Dorsolateral prefrontal cortex (tissue), 120 donors: ENCODE measurements at regions of chr5 and their contacts with region 1.

Region 1: DNA sequence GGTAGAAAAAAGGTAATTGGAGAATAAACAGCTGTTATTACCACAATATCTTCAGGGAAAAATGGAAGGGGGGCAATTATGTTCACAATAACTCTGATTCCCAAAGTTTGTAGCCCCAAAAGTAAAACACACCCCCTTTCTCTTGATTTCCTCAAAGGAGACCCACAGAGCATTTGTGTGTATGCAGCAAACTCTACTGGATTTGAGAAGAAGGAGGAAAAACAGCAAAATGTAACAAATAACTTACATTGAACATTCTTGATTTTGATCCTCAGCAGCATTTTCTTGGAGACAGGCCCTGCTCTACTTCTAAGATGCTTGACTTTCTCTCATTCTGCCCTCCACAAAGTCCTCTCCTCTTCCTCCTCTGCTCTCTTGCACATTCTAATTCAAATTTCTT is 420.8 kb upstream of the EDIL3 start:
- DNase-seq: no peak
- H3K4me3 ChIP-seq: no peak overlapping the region
- H3K27ac ChIP-seq: peak overlapping the region in 10 of 59 donors; percentile 6 to 71 (median 56)
- H3K27me3 ChIP-seq: no peaks in the 10 kb centered on the region
- CTCF ChIP-seq: peak in 21 of 56 donors; percentile 6 to 53 (median 22)

Region 2: GRCh38 chr5:84573017-84573712 is 232.3 kb before region 1 on chr5:
- intact Hi-C with region 1: loop called in 1 of 2 experiments (anchors 5 kb)
- DNase-seq: no peak
- H3K4me3 ChIP-seq: peak overlapping the region in 23 of 59 donors; percentile 0 to 40 (median 14)
- H3K27ac ChIP-seq: peak overlapping the region; percentile 19 to 100 (median 91)
- H3K27me3 ChIP-seq: no peaks in the 10 kb centered on the region
- CTCF ChIP-seq: no peak

Region 3: GRCh38 chr5:84791138-84791537 is 14.3 kb before region 1 on chr5:
- intact Hi-C with region 1: no loop called
- DNase-seq: no peak
- H3K4me3 ChIP-seq: no peak overlapping the region
- H3K27ac ChIP-seq: peak overlapping the region in 4 of 59 donors; percentile 1 to 15 (median 4)
- H3K27me3 ChIP-seq: no peaks in the 10 kb centered on the region
- CTCF ChIP-seq: no peak